ENCODE measurements at regions of chr19 and their contacts with region 1.

Region 1: DNA sequence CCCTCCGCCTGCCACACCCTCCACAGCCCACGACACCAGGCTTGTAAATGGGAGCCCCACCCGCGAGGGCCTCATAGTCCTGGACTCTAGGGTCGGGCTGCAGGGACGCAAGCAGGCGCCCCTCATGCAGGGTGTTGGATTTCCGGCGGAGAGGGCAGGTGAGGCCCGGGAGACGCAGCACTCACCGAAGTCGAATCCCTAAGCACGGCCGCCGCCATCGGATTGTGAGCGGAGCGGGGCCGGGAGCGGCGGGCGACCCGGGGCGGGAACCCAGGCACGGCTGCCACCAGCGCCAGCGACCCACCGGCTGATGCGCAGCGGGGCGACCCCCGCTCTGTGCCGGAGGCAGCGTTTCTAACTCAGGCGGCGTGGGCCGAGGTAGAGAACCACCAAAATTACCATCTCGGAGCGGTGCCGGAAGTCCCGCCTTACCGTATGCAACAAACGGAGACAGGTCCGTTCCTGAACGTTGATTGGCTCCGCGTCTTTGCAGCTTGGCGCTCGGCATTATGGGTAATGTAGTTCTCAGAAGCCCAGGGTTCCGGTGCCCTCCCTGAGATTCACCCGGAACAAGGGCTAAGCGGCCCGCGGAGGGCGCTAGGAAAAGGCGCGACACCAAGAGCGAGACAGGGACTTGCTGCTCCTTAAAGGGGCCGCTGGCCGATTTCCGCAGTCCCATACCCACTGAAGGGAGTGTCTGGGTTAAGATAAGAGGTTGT is at the start of gene ZNF416:
- DNase-seq: peak; percentile 88 to 99
- ATAC-seq: peak; percentile 98
- H3K4me3 ChIP-seq: peak within 1 kb of the TSS; percentile 52
- H3K4me3 Mint-ChIP-seq: peak within 1 kb of the TSS; percentile 85
- H3K27ac ChIP-seq: peak within 1 kb of the TSS; percentile 36
- H3K27ac Mint-ChIP-seq: peak within 1 kb of the TSS; percentile 83 to 91
- H3K4me1 ChIP-seq: peaks cover 15% of the 10 kb centered on the region
- H3K4me1 Mint-ChIP-seq: peaks cover 26 to 27% of the 10 kb centered on the region in 2 donors
- H3K27me3 ChIP-seq: no peaks in the 10 kb centered on the region
- H3K27me3 Mint-ChIP-seq: no peaks in the 10 kb centered on the region
- CTCF ChIP-seq: no peak
- total RNA-seq, gene ZNF416: 1.7 to 5.3 (median 3.3) TPM

Region 2: GRCh38 chr19:57435062-57435978 is 143.3 kb before region 1 on chr19 and contains the start of gene ZNF749:
- intact Hi-C with region 1: loop called (anchors 1 kb)
- DNase-seq: peak; percentile 92 to 99
- ATAC-seq: peak; percentile 99 to 100 (median 100)
- H3K4me3 ChIP-seq: peak within 1 kb of the TSS; percentile 62
- H3K4me3 Mint-ChIP-seq: peak within 1 kb of the TSS; percentile 99
- H3K27ac ChIP-seq: peak within 1 kb of the TSS; percentile 70
- H3K27ac Mint-ChIP-seq: peak within 1 kb of the TSS; percentile 87 to 88
- H3K4me1 ChIP-seq: peaks cover 14% of the 10 kb centered on the region
- H3K4me1 Mint-ChIP-seq: peaks cover 21 to 41% of the 10 kb centered on the region in 2 donors
- H3K27me3 ChIP-seq: no peaks in the 10 kb centered on the region
- H3K27me3 Mint-ChIP-seq: peaks cover 0 to 2% of the 10 kb centered on the region in 2 donors
- CTCF ChIP-seq: no peak
- total RNA-seq, gene ZNF749: 7.0 to 9.8 (median 7.8) TPM

Region 3: DNA sequence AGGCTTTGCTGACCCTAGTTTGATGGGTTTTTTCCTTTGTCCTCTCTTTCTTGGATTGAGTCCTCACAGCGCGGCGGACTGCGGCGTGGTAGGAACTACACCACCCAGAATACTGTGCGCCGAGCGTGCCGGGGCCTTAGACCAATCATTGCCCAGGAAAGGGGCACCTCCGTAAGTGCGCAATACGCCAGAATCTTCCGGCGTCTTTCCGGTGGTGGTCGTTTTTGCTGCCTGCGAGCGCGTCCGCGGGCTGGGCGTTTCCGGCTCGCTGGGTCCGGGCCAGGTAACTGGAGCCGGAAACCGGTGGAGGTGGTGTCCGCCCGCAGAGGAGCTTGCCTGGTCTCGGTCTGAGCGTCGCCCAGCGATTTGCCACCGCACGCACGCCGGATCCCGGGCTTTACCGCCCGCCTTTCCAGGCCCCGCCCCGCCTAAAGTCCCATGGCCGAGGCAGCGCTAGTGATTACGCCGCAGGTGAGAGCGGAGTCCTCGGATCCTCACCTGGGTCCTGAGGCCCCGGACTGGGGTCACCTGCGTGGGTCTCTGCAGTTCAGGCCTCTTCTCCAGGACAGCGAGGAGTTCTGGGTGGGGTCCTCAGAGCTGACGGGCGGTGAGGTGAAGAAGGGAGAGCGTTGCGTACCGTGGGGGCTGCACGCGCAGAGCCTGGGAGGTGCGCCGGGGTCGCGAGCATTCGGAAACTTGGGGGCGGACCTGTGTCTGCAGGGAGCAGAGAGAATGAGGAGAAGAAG is 51.3 kb before region 1 on chr19 and contains the start of gene ZNF549:
- intact Hi-C with region 1: loop called (anchors 1 kb)
- DNase-seq: peak; percentile 82 to 94
- ATAC-seq: peak; percentile 98 to 99 (median 99)
- H3K4me3 ChIP-seq: peak within 1 kb of the TSS; percentile 89
- H3K4me3 Mint-ChIP-seq: peak within 1 kb of the TSS; percentile 95
- H3K27ac ChIP-seq: peak within 1 kb of the TSS; percentile 81
- H3K27ac Mint-ChIP-seq: peak within 1 kb of the TSS; percentile 90 to 96
- H3K4me1 ChIP-seq: peaks cover 13% of the 10 kb centered on the region
- H3K4me1 Mint-ChIP-seq: peaks cover 23 to 26% of the 10 kb centered on the region in 2 donors
- H3K27me3 ChIP-seq: no peaks in the 10 kb centered on the region
- H3K27me3 Mint-ChIP-seq: no peaks in the 10 kb centered on the region
- CTCF ChIP-seq: no peak
- total RNA-seq, gene ZNF549: 7.1 to 12.1 (median 8.6) TPM

Region 4: DNA sequence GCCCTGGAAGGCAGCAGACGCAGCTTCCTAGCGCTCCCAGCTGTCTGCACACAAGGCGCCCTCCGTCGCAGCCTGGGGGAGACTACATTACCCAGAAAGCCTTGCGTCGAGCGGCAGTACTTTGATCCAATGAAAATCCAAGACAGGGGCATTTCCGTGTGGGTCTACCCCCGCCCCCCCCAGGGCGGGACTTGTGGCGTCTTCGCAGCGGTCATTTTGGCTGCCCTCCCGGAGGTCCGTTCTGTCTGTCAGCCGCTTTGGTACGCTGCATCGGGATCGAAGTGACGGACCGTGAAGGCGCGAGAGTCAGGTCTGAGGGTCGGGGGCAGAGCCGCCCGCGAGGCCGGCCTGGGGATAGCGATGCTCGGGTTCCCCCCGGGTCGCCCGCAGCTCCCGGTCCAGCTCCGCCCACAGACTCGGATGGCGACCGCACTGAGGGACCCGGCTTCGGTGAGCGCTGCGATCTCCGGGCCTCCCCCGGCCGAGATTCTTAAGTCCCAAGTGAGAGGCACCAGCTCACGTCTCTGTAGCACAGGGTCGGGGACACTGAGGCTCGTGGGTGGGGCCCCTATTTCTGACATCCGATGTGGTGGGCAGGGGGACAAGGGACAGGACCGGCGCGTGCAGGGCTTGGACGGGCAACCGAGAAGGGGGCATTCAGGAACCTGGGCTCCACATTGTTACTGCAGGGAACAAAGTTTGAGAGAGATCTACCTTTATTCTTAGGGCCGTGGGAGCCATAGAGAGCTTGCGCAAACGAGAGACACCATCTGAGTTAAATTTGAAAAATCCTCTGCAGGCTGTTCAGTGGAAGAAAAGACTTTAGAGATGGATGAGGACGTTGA is 54.6 kb after region 1 on chr19 and contains the start of gene ZNF211:
- intact Hi-C with region 1: loop called (anchors 2 kb)
- DNase-seq: peak; percentile 89 to 94
- ATAC-seq: peak; percentile 99 to 100 (median 100)
- H3K4me3 ChIP-seq: peak within 1 kb of the TSS; percentile 83
- H3K4me3 Mint-ChIP-seq: peak within 1 kb of the TSS; percentile 94
- H3K27ac ChIP-seq: peak within 1 kb of the TSS; percentile 80
- H3K27ac Mint-ChIP-seq: peak within 1 kb of the TSS; percentile 87 to 91
- H3K4me1 ChIP-seq: peaks cover 13% of the 10 kb centered on the region
- H3K4me1 Mint-ChIP-seq: peaks cover 24 to 32% of the 10 kb centered on the region in 2 donors
- H3K27me3 ChIP-seq: no peaks in the 10 kb centered on the region
- H3K27me3 Mint-ChIP-seq: no peaks in the 10 kb centered on the region
- CTCF ChIP-seq: no peak
- total RNA-seq, gene ZNF211: 33.7 to 47.0 (median 36.9) TPM

Region 5: DNA sequence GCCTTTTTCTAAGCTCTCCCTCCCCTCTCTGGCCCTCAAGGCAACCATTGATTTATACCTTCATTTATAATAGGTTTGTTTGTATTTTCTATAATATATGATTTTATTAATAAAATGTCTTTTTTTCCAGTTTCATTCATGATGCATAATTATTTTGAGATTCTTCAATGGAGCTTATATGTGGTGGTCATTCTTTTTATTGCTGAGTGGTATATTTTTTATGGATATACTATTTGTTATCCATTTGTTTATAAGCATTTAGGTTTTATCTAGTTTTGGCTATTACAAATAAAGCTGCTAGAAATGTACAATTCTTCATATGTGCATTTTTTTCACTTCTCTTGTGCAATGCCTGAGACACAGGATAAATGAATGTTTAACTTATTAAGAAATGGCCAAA is 65.1 kb after region 1 on chr19:
- intact Hi-C with region 1: no loop called
- DNase-seq: no peak
- ATAC-seq: no peak
- H3K4me3 ChIP-seq: no peak overlapping the region
- H3K4me3 Mint-ChIP-seq: no peak overlapping the region
- H3K27ac ChIP-seq: no peak overlapping the region
- H3K27ac Mint-ChIP-seq: no peak overlapping the region
- H3K4me1 ChIP-seq: no peaks in the 10 kb centered on the region
- H3K4me1 Mint-ChIP-seq: no peaks in the 10 kb centered on the region
- H3K27me3 ChIP-seq: no peaks in the 10 kb centered on the region
- H3K27me3 Mint-ChIP-seq: no peaks in the 10 kb centered on the region
- CTCF ChIP-seq: no peak